HepG2 (cell line): ENCODE measurements at regions of chr12 and their contacts with region 1.

Region 1: DNA sequence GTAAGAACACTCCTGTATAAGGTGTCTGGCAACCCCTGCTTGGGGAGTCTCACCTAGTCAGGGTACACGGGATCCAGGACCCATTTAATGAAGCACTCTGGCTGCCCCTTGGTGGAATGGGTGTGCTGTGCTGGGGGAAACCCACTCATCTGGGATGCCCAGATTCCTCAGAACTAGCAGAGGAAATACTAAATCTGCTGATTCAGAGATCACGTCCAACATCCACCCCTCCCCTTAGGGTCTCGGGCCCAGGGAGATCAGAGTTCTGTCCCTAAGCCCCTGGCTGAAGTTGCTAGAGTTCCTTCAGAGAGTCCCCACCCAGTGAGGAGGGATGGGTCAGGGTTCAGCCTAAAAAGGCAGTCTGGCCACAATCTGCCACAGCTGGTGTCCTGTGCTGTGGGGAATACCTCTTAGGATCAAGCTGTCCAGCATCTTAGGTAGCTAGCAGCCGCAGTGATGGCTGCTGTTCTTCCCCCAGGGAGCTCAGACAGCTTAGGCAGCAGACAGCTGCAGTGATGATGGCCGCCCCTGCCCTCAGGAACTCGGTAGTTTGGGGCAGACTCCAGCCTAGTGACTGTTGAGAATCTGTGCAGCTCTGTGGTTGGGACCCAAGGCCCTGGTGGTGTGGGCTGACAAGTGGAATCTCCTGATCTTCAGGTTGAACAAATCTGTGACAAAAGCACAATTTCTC is 74.8 kb downstream of the IFNG-AS1 start:
- DNase-seq: no peak
- ATAC-seq: no peak
- H3K4me3 ChIP-seq: no peak overlapping the region
- H3K27ac ChIP-seq: no peak overlapping the region
- H3K4me1 ChIP-seq: no peaks in the 10 kb centered on the region
- H3K27me3 ChIP-seq: no peaks in the 10 kb centered on the region
- CTCF ChIP-seq: no peak
- EP300 ChIP-seq: no peak
- POLR2A ChIP-seq: no peak
- RAD21 ChIP-seq: no peak

Region 2: GRCh38 chr12:68092976-68093375 is 28.9 kb after region 1 on chr12:
- CTCF ChIA-PET with region 1: no interaction called
- POLR2A ChIA-PET with region 1: no interaction called
- in situ Hi-C with region 1: no loop called
- intact Hi-C with region 1: loop called (anchors 1 kb)
- DNase-seq: no peak
- ATAC-seq: no peak
- H3K4me3 ChIP-seq: no peak overlapping the region
- H3K27ac ChIP-seq: no peak overlapping the region
- H3K4me1 ChIP-seq: no peaks in the 10 kb centered on the region
- H3K27me3 ChIP-seq: no peaks in the 10 kb centered on the region
- CTCF ChIP-seq: no peak
- EP300 ChIP-seq: no peak
- POLR2A ChIP-seq: no peak
- RAD21 ChIP-seq: no peak

Region 3: GRCh38 chr12:68131869-68132405 is 67.9 kb after region 1 on chr12:
- CTCF ChIA-PET with region 1: no interaction called
- POLR2A ChIA-PET with region 1: no interaction called
- in situ Hi-C with region 1: no loop called
- intact Hi-C with region 1: no loop called
- DNase-seq: no peak
- ATAC-seq: no peak
- H3K4me3 ChIP-seq: no peak overlapping the region
- H3K27ac ChIP-seq: no peak overlapping the region
- H3K4me1 ChIP-seq: no peaks in the 10 kb centered on the region
- H3K27me3 ChIP-seq: no peaks in the 10 kb centered on the region
- CTCF ChIP-seq: no peak
- EP300 ChIP-seq: no peak
- POLR2A ChIP-seq: no peak
- RAD21 ChIP-seq: no peak

Region 4: GRCh38 chr12:68279227-68280054 is 215.4 kb after region 1 on chr12:
- CTCF ChIA-PET with region 1: no interaction called
- POLR2A ChIA-PET with region 1: no interaction called
- in situ Hi-C with region 1: no loop called
- intact Hi-C with region 1: no loop called
- DNase-seq: peak; percentile 5
- ATAC-seq: no peak
- H3K4me3 ChIP-seq: no peak overlapping the region
- H3K27ac ChIP-seq: no peak overlapping the region
- H3K4me1 ChIP-seq: no peaks in the 10 kb centered on the region
- H3K27me3 ChIP-seq: 0 out of 5 replicates have a peak, but pooled peaks cover 0 to 2% of the 10 kb centered on the region in 2 experiments
- CTCF ChIP-seq: no peak
- EP300 ChIP-seq: no peak
- POLR2A ChIP-seq: no peak
- RAD21 ChIP-seq: no peak